Prostate gland (tissue), 2 donors: ENCODE measurements at regions of chr3 and their contacts with region 1.

Region 1: GRCh38 chr3:16511681-16512434 is 1.6 kb downstream of the RFTN1 start:
- DNase-seq: no peak
- H3K4me3 ChIP-seq: peak overlapping the region; percentile 43 to 52
- H3K27ac ChIP-seq: peak overlapping the region; percentile 6 to 57
- H3K4me1 ChIP-seq: no peaks in the 10 kb centered on the region
- H3K27me3 ChIP-seq: peaks cover 4% of the 10 kb centered on the region
- CTCF ChIP-seq: no peak
- POLR2A ChIP-seq: no peak

Region 2: GRCh38 chr3:16378920-16379319 is 132.9 kb before region 1 on chr3:
- intact Hi-C with region 1: loop called (anchors 10 kb)
- DNase-seq: no peak
- H3K4me3 ChIP-seq: no peak overlapping the region
- H3K27ac ChIP-seq: no peak overlapping the region
- H3K4me1 ChIP-seq: no peaks in the 10 kb centered on the region
- H3K27me3 ChIP-seq: no peaks in the 10 kb centered on the region
- CTCF ChIP-seq: no peak
- POLR2A ChIP-seq: no peak

Region 3: GRCh38 chr3:16448639-16449070 is 63.2 kb before region 1 on chr3:
- intact Hi-C with region 1: loop called (anchors 5 kb)
- DNase-seq: peak; percentile 13
- H3K4me3 ChIP-seq: no peak overlapping the region
- H3K27ac ChIP-seq: no peak overlapping the region
- H3K4me1 ChIP-seq: no peaks in the 10 kb centered on the region
- H3K27me3 ChIP-seq: no peaks in the 10 kb centered on the region
- CTCF ChIP-seq: no peak
- POLR2A ChIP-seq: no peak